ENCODE measurements at regions of chr12 and their contacts with region 1.

Region 1: GRCh38 chr12:121793838-121794533 is 498 bp upstream of the RHOF start:
- DNase-seq: peak; percentile 82 to 98
- H3K4me3 ChIP-seq: peak overlapping the region; percentile 79
- H3K27ac ChIP-seq: peak overlapping the region; percentile 100
- H3K4me1 ChIP-seq: peaks cover 71% of the 10 kb centered on the region
- H3K27me3 ChIP-seq: no peaks in the 10 kb centered on the region
- CTCF ChIP-seq: peak; percentile 87

Region 2: GRCh38 chr12:121443193-121443870 is 350.7 kb before region 1 on chr12:
- CTCF ChIA-PET with region 1: interaction called, 11 read pairs
- POLR2A ChIA-PET with region 1: no interaction called
- intact Hi-C with region 1: no loop called
- DNase-seq: peak; percentile 42 to 79
- H3K4me3 ChIP-seq: no peak overlapping the region
- H3K27ac ChIP-seq: no peak overlapping the region
- H3K4me1 ChIP-seq: no peaks in the 10 kb centered on the region
- H3K27me3 ChIP-seq: no peaks in the 10 kb centered on the region
- CTCF ChIP-seq: peak; percentile 88

Region 3: DNA sequence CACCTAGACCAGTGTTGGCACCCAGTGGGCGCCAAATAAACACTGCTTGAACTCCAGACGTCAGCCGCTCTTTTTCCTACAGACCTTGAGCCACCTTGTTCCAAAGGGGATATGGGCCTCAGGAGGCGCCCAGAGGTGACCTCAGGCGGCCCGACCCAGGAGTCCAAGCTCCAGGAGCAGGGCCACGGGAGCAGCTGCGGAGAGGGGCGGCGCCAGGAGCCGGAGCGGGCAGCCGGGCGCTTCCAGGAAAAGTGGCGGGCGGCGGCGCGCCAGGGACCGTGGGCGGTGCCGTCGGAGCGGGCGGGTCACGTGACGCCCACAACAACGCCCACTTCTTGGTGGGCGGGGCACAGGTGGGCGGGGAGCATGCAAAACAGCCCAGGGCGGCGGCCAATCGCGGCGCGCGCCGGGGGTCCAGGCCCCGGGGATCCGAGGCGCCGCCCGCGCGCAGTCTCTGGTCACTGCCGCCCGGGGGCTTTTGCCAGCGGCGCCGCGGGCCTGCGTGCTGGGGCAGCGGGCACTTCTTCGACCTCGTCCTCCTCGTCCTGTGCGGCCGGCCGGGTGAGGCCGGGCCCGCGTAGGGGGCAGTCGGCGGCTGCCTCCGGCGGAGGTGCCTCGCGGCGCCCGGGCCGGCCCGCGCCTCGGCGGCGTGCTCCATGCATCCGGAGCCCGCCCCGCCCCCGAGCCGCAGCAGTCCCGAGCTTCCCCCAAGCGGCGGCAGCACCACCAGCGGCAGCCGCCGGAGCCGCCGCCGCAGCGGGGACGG is 167.7 kb before region 1 on chr12 and contains the start of gene ORAI1:
- CTCF ChIA-PET with region 1: interaction called, 8 read pairs
- POLR2A ChIA-PET with region 1: no interaction called
- intact Hi-C with region 1: loop called (anchors 2 kb)
- DNase-seq: peak; percentile 66 to 97
- H3K4me3 ChIP-seq: peak within 1 kb of the TSS; percentile 92
- H3K27ac ChIP-seq: peak within 1 kb of the TSS; percentile 44
- H3K4me1 ChIP-seq: peaks cover 29% of the 10 kb centered on the region
- H3K27me3 ChIP-seq: no peaks in the 10 kb centered on the region
- CTCF ChIP-seq: no peak
- total RNA-seq, gene ORAI1: 25.6 and 28.1 TPM in 2 replicates

Region 4: DNA sequence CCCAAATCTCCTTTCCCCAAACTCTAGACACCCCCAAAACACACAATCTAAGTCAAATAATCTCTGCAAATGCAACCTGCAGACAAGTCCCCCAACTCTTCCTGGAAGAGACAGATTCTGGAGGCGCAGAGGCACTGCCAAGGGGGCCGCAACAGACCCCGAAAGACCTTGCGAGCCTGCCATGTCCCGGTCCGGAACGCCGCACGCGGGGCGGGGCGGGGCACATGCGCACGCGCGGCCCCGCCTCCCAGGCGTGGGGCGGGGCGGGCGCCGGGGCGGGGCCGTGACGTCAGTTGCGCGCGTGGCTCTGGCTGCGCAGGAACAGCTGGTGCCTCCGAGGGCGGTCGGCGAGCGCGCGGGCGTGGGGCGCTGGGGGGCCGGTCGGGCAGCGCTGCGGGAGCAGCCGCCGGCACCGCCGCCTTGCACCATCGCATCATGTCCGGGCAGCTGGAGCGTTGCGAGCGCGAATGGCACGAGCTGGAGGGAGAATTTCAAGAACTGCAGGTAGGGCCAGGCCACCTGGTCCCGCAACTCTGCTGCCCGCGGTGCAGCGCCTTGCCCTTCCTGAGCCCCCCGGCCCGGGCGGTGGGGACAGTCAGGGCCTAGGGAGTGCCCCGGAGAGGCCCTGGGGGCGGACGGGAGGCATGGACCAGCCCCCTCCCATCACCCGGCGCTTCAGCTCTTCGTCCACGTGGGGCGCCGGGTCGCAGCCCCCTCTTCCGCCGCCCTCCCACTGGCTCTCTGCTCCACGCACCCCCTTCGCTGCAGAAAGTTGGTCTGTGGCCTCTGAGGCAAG is 81.3 kb before region 1 on chr12 and contains the start of gene TMEM120B:
- CTCF ChIA-PET with region 1: interaction called, 6 read pairs
- POLR2A ChIA-PET with region 1: no interaction called
- intact Hi-C with region 1: loop called (anchors 5 kb)
- DNase-seq: peak; percentile 41 to 84
- H3K4me3 ChIP-seq: peak within 1 kb of the TSS; percentile 77
- H3K27ac ChIP-seq: peak within 1 kb of the TSS; percentile 40; the same call in 1 of the 2 replicates
- H3K4me1 ChIP-seq: peaks cover 35% of the 10 kb centered on the region
- H3K27me3 ChIP-seq: no peaks in the 10 kb centered on the region
- CTCF ChIP-seq: no peak
- total RNA-seq, gene TMEM120B: 10.3 and 12.4 TPM in 2 replicates

Region 5: DNA sequence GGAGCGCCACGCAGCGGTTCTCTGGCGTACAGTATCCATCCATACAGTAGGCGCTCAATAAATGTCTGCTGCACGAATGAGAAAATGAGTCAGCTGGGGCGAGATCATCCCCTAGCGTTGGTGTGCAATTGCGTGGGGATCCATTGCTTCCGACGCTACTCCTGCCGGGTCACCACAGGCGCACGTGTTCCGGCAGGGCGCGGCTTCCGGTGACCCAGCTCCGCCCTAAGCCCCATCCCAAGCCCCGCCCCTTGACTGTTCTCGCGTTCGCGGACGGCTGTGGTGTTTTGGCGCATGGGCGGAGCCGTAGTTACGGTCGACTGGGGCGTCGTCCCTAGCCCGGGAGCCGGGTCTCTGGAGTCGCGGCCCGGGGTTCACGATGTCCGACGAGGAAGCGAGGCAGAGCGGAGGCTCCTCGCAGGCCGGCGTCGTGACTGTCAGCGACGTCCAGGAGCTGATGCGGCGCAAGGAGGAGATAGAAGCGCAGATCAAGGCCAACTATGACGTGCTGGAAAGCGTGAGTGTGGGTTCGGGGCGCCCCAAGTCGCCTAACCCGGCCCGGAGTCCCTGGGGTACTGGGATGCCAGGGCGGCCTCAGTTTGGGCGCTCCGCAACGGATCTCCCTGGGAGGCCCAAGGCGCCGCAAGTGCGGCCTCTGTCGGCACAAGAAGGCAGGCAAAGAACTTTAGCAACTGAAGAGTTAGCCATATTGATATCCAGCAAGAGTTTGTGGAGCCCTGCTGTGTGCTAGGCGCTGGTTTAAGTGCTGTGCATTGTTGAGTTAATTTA is 94.7 kb after region 1 on chr12 and contains the start of gene PSMD9:
- CTCF ChIA-PET with region 1: interaction called, 18 read pairs
- POLR2A ChIA-PET with region 1: interaction called, 3 read pairs
- intact Hi-C with region 1: loop called (anchors 1 kb)
- DNase-seq: peak; percentile 89 to 98
- H3K4me3 ChIP-seq: peak within 1 kb of the TSS; percentile 73
- H3K27ac ChIP-seq: peak within 1 kb of the TSS; percentile 72
- H3K4me1 ChIP-seq: peaks cover 26% of the 10 kb centered on the region
- H3K27me3 ChIP-seq: no peaks in the 10 kb centered on the region
- CTCF ChIP-seq: peak; percentile 63
- total RNA-seq, gene PSMD9: 64.8 and 76.6 TPM in 2 replicates

Region 6: GRCh38 chr12:122116707-122117535 is 322.9 kb after region 1 on chr12:
- CTCF ChIA-PET with region 1: interaction called, 11 read pairs
- POLR2A ChIA-PET with region 1: no interaction called
- intact Hi-C with region 1: no loop called
- DNase-seq: no peak
- H3K4me3 ChIP-seq: no peak overlapping the region
- H3K27ac ChIP-seq: no peak overlapping the region
- H3K4me1 ChIP-seq: peaks cover 8% of the 10 kb centered on the region
- H3K27me3 ChIP-seq: no peaks in the 10 kb centered on the region
- CTCF ChIP-seq: no peak